T-cell (primary cell): ENCODE measurements at regions of chr3 and their contacts with region 1.

Region 1: DNA sequence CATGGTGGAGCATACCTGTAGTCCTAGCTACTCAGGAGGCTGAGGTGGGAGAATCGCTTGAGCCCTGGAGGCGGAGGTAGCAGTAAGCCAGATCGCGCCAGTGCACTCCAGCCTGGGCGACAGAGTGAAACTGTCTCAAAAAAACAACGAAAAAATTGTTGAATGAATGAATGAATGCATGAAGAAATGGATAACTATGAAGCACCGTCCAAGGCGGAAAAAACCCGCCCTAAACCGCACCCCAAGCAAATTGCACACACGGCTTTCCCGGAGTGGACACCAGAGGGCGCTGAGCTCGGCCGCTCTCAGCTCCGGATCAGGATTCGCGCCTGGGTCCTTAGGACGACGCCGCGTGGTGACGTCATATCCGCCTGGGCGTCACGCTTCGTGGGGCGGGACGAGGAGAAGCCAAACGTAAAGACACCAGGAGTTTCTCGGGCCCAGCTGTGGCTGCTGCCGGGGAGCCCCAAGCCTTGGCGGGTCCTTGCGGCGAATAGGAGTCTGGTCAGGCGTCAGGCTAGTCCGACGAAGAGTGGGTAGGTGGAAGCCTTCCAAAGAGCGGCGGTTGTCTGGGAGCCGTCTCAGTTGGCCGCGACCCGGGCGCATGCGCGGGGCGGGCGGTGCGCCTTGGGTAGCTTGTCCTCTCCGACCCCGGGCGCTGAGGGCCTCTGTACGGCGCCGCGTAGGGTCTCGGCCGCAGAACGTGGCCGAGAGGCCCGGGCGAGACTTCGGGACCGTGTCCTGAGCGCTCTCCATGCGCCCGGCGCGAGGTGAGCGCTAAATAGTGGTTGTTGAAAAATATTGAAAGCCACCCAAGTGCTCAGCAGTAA is at the starts of genes HTD2 and RPP14:
- DNase-seq: peak; percentile 94 to 100 (median 98)
- ATAC-seq: peak; percentile 88 to 93 (median 89)
- H3K4me3 ChIP-seq: peak within 1 kb of the TSS; percentile 82 to 90
- H3K4me3 Mint-ChIP-seq: peak within 1 kb of the TSS; percentile 92 to 99 (median 97)
- H3K27ac ChIP-seq: peak within 1 kb of the TSS; percentile 95
- H3K27ac Mint-ChIP-seq: peak within 1 kb of the TSS; percentile 98 to 99
- H3K4me1 ChIP-seq: peaks cover 14 to 35% of the 10 kb centered on the region in 2 experiments
- H3K4me1 Mint-ChIP-seq: peaks cover 33 to 43% (median 38%) of the 10 kb centered on the region in 3 donors
- H3K27me3 ChIP-seq: peaks cover 0 to 3% of the 10 kb centered on the region in 2 experiments
- H3K27me3 Mint-ChIP-seq: peaks cover 13 to 15% of the 10 kb centered on the region in 2 donors
- total RNA-seq, gene HTD2: 7.3 to 10.0 (median 8.8) TPM
- total RNA-seq, gene RPP14: 13.1 to 15.7 (median 13.9) TPM

Region 2: GRCh38 chr3:58188173-58188564 is 117.9 kb before region 1 on chr3:
- CTCF ChIA-PET with region 1: interaction called in 1 of 2 experiments, 14 read pairs
- POLR2A ChIA-PET with region 1: no interaction called
- DNase-seq: no peak
- ATAC-seq: no peak
- H3K4me3 ChIP-seq: no peak overlapping the region
- H3K4me3 Mint-ChIP-seq: no peak overlapping the region
- H3K27ac ChIP-seq: no peak overlapping the region
- H3K27ac Mint-ChIP-seq: no peak overlapping the region
- H3K4me1 ChIP-seq: peaks cover 0 to 5% of the 10 kb centered on the region in 2 experiments
- H3K4me1 Mint-ChIP-seq: peaks cover 0 to 2% (median 2%) of the 10 kb centered on the region in 3 donors
- H3K27me3 ChIP-seq: peaks cover 0 to 2% of the 10 kb centered on the region in 2 experiments
- H3K27me3 Mint-ChIP-seq: no peaks in the 10 kb centered on the region

Region 3: GRCh38 chr3:58322793-58323192 is 16.7 kb after region 1 on chr3:
- CTCF ChIA-PET with region 1: interaction called, 3 to 28 read pairs
- POLR2A ChIA-PET with region 1: interaction called, 4 to 5 read pairs
- DNase-seq: no peak
- ATAC-seq: no peak
- H3K4me3 ChIP-seq: no peak overlapping the region
- H3K4me3 Mint-ChIP-seq: no peak overlapping the region
- H3K27ac ChIP-seq: no peak overlapping the region
- H3K27ac Mint-ChIP-seq: no peak overlapping the region
- H3K4me1 ChIP-seq: peaks cover 0 to 3% of the 10 kb centered on the region in 2 experiments
- H3K4me1 Mint-ChIP-seq: peaks cover 19 to 31% (median 26%) of the 10 kb centered on the region in 3 donors
- H3K27me3 ChIP-seq: no peaks in the 10 kb centered on the region
- H3K27me3 Mint-ChIP-seq: no peaks in the 10 kb centered on the region

Region 4: DNA sequence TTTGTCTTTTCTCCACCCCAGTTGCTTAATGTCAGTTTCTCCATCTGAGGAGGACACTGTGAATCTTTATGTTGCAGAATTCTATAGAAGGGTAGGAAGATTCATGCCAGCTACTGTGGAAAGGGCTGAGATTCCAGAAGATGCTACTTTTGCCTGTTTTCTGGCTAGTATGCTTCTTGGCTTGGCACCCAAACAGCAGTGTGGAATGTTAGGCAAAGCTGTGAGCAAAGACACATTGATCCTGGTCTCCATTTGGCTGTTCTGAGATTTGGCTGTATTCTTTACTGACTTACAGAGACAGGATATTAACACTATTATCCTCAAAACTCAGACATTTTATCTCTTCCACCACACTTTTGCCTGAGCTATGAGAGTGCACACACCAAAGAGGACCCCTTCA is 88.2 kb after region 1 on chr3:
- CTCF ChIA-PET with region 1: no interaction called
- POLR2A ChIA-PET with region 1: no interaction called
- DNase-seq: no peak
- ATAC-seq: no peak
- H3K4me3 ChIP-seq: no peak overlapping the region
- H3K4me3 Mint-ChIP-seq: no peak overlapping the region
- H3K27ac ChIP-seq: no peak overlapping the region
- H3K27ac Mint-ChIP-seq: no peak overlapping the region
- H3K4me1 ChIP-seq: no peaks in the 10 kb centered on the region
- H3K4me1 Mint-ChIP-seq: no peaks in the 10 kb centered on the region
- H3K27me3 ChIP-seq: no peaks in the 10 kb centered on the region
- H3K27me3 Mint-ChIP-seq: no peaks in the 10 kb centered on the region

Region 5: DNA sequence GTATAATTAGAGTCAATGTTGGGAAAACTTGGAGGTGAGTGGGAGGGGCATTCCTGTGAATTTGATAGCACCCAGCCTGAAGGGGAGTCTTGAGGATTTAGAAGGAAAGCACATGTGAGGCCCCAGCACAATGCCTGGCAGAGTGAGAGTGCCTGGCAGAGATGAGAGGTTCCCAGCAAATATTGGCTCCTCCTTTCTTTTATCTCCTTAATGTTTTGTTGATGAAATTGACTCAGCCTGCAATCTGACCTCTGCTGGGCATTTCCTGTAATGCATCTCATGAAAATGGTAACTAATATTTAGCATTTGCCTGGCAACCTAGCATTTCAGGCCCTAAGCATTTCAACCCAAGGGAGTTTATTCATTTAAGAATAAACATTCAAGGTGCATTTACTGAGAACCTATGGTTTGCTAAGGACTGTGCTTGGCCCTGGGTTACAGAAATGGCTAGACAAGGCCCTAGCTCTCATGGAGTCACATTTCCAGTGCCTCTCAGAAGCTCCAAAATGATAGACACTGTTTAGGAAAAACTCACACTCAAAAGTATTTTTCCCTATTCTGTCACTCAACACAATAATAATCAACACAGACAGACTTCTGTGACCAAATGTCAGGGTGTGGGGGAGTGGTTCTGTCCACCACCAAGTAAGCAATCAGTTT is 108.6 kb after region 1 on chr3:
- CTCF ChIA-PET with region 1: interaction called, 9 to 15 read pairs
- POLR2A ChIA-PET with region 1: no interaction called
- DNase-seq: peak in 29 of 35 experiments; percentile 7 to 74 (median 28)
- ATAC-seq: peak; percentile 37 to 64 (median 58)
- H3K4me3 ChIP-seq: no peak overlapping the region
- H3K4me3 Mint-ChIP-seq: no peak overlapping the region
- H3K27ac ChIP-seq: no peak overlapping the region
- H3K27ac Mint-ChIP-seq: peak overlapping the region in 1 of 2 donors; percentile 39
- H3K4me1 ChIP-seq: no peaks in the 10 kb centered on the region
- H3K4me1 Mint-ChIP-seq: peaks cover 4 to 8% (median 7%) of the 10 kb centered on the region in 3 donors
- H3K27me3 ChIP-seq: no peaks in the 10 kb centered on the region
- H3K27me3 Mint-ChIP-seq: no peaks in the 10 kb centered on the region

Region 6: GRCh38 chr3:58630076-58630709 is 324.1 kb after region 1 on chr3:
- CTCF ChIA-PET with region 1: interaction called in 1 of 2 experiments, 13 read pairs
- POLR2A ChIA-PET with region 1: no interaction called
- DNase-seq: peak in 31 of 35 experiments; percentile 10 to 67 (median 35)
- ATAC-seq: peak in 2 of 4 experiments; percentile 40 to 46
- H3K4me3 ChIP-seq: no peak overlapping the region
- H3K4me3 Mint-ChIP-seq: no peak overlapping the region
- H3K27ac ChIP-seq: no peak overlapping the region
- H3K27ac Mint-ChIP-seq: no peak overlapping the region
- H3K4me1 ChIP-seq: peaks cover 0 to 4% of the 10 kb centered on the region in 2 experiments
- H3K4me1 Mint-ChIP-seq: peaks cover 0 to 1% (median 0%) of the 10 kb centered on the region in 3 donors
- H3K27me3 ChIP-seq: peaks cover 0 to 35% of the 10 kb centered on the region in 2 experiments
- H3K27me3 Mint-ChIP-seq: peaks cover 0 to 19% of the 10 kb centered on the region in 2 donors